MCF 10A (cell line): ENCODE measurements at regions of chr11 and their contacts with region 1.

Region 1: DNA sequence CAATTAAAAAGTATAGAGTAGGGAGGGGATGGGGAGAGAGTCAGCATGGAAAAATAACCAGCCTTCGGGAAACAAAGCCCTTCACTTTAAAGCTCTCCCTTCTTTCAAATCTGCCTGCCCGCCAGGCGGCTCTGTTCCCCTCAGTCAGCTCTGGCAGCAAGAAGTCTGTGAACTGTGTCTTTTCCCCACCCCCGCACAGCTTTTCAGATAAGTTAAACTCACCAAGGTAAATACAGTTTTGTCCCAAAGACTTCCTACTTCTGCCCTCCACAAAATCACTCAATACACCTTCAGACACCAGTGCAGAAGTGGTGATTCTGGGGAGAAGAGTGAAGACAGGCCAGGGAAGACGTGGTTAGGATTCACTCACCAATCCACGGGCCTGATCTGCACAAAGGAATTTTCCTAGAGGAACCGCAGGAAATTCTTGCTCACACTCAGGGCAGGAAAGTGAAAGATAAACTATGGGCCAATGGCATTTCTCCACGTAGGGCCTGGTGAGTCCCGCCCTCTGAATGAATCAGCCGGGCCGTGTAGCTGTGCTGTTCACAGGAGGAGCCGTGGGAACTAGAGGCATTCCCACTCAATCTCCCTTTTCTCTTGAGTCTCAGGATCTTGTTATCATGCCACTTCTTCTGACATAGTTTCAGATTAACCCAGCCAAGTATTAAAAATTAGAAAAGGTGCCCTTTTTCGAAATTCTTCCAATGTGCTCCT is at the start of gene TRIM5:
- DNase-seq: peak; percentile 95
- H3K4me3 Mint-ChIP-seq: peak within 1 kb of the TSS; percentile 81
- H3K27ac Mint-ChIP-seq: peak within 1 kb of the TSS; percentile 78
- H3K4me1 Mint-ChIP-seq: peaks cover 14% of the 10 kb centered on the region
- H3K27me3 Mint-ChIP-seq: no peaks in the 10 kb centered on the region
- CTCF ChIP-seq: peak; percentile 48
- total RNA-seq, gene TRIM5: 27.9 and 28.6 TPM in 2 replicates

Region 2: GRCh38 chr11:5596607-5597201 is 88.1 kb before region 1 on chr11 and contains the start of gene TRIM6:
- CTCF ChIA-PET with region 1: interaction called, 9 read pairs
- POLR2A ChIA-PET with region 1: interaction called, 10 read pairs
- intact Hi-C with region 1: no loop called
- DNase-seq: peak; percentile 47
- H3K4me3 Mint-ChIP-seq: peak within 1 kb of the TSS; percentile 76
- H3K27ac Mint-ChIP-seq: no peak within 1 kb of the TSS
- H3K4me1 Mint-ChIP-seq: peaks cover 11% of the 10 kb centered on the region
- H3K27me3 Mint-ChIP-seq: no peaks in the 10 kb centered on the region
- CTCF ChIP-seq: no peak
- total RNA-seq, gene TRIM6: 0.74 and 0.75 TPM in 2 replicates

Region 3: GRCh38 chr11:5605849-5606248 is 79.0 kb before region 1 on chr11:
- CTCF ChIA-PET with region 1: interaction called, 9 read pairs
- POLR2A ChIA-PET with region 1: interaction called, 13 read pairs
- intact Hi-C with region 1: loop called (anchors 2 kb)
- DNase-seq: peak; percentile 87
- H3K4me3 Mint-ChIP-seq: no peak overlapping the region
- H3K27ac Mint-ChIP-seq: no peak overlapping the region
- H3K4me1 Mint-ChIP-seq: peaks cover 16% of the 10 kb centered on the region
- H3K27me3 Mint-ChIP-seq: no peaks in the 10 kb centered on the region
- CTCF ChIP-seq: peak; percentile 16

Region 4: DNA sequence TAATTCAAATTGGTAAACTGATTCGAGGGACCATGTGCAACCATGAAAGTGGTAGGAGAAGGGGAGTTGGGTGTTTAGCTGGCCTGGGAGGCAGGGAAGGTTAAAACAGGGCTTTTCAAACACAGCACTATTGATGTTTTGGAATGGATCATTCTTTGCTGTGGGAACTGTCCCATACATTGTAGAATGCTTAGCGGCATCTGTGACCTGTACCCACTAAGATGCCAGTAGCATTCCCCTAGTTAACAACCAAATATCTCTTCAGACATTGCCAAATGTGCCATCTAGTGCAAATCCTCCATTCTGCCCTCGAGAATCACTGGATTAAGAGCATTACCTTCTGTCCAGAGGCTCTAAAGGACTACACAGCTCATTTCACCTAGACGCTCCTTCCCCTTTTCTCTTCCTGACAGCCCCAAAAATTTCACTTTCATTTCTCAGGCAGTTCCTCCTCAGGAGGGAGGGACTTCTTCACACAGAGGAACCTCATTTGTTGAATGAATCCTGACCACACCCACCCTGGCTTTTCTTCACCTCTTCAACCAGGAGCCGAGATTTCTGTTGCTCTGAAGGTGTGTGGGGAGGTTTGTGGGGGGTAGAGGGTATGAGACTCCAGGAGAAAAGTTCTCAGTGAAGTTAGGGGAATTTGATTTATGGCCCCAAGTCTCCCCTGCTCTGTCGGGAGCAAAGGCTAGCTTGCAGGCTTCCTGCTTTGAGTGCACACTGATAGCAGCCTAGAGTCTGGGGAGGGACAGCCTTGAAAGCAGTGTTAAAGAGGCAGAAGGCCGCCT is 60.1 kb before region 1 on chr11 and contains the start of gene TRIM34:
- CTCF ChIA-PET with region 1: interaction called, 16 read pairs
- POLR2A ChIA-PET with region 1: interaction called, 14 read pairs
- intact Hi-C with region 1: loop called (anchors 2 kb)
- DNase-seq: peak; percentile 83
- H3K4me3 Mint-ChIP-seq: peak within 1 kb of the TSS; percentile 81
- H3K27ac Mint-ChIP-seq: peak within 1 kb of the TSS; percentile 57
- H3K4me1 Mint-ChIP-seq: peaks cover 31% of the 10 kb centered on the region
- H3K27me3 Mint-ChIP-seq: no peaks in the 10 kb centered on the region
- CTCF ChIP-seq: no peak
- total RNA-seq, gene TRIM34: 0.96 and 2.1 TPM in 2 replicates

Region 5: DNA sequence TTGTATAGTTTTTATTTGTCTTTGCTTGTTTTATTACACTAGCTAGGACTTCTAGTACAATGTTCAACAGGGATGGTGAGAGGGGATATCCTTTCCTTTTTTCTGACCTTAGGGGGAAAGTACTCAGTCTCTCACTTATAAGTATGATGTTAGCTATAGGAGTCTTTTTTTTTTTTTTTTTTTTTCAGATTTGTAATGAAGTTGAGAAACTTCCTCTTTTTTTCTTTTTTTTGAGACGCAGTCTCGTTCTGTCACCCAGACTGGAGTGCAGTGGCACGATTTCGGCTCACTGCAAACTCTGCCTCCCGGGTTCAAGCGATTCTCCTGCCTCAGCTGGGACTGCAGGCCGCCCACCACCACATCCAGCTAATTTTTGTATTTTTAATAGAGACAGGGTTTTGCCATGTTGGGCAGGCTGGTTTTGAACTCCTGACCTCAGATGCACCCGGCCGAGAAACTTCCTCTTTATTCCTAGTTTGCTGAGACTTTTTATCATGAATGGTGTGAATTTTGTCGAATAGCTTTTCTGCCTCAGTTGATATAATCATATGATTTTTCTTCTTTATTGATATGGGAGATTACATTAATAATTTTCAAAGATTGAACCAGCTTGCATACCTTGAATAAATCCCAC is 15.7 kb after region 1 on chr11:
- CTCF ChIA-PET with region 1: interaction called, 8 read pairs
- POLR2A ChIA-PET with region 1: interaction called, 10 read pairs
- intact Hi-C with region 1: no loop called
- DNase-seq: no peak
- H3K4me3 Mint-ChIP-seq: no peak overlapping the region
- H3K27ac Mint-ChIP-seq: no peak overlapping the region
- H3K4me1 Mint-ChIP-seq: no peaks in the 10 kb centered on the region
- H3K27me3 Mint-ChIP-seq: no peaks in the 10 kb centered on the region
- CTCF ChIP-seq: no peak

Region 6: DNA sequence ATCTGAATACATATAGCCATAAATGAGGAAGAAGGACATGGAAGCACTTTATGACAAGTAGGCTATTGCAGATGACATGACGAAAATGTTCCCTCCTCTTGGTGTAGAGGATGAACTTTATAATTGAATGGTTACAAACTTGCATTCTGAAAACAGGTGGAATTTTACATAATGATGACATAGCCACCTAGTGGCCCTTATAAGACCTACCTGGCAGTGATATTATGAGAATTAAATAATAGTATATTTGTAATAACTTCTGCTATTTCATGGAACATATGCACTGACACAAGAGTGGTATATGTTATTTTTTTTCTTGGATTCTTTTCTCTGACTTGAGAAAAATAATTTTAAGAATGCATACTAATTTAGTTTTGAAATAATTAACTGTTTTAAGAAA is 27.7 kb after region 1 on chr11:
- CTCF ChIA-PET with region 1: interaction called, 26 read pairs
- POLR2A ChIA-PET with region 1: interaction called, 9 read pairs
- intact Hi-C with region 1: loop called (anchors 1 kb)
- DNase-seq: peak; percentile 24
- H3K4me3 Mint-ChIP-seq: no peak overlapping the region
- H3K27ac Mint-ChIP-seq: no peak overlapping the region
- H3K4me1 Mint-ChIP-seq: no peaks in the 10 kb centered on the region
- H3K27me3 Mint-ChIP-seq: no peaks in the 10 kb centered on the region
- CTCF ChIP-seq: peak; percentile 37